ENCODE measurements at regions of chr4 and their contacts with region 1.

Region 1: GRCh38 chr4:130922955-130923354 is 1827.0 kb downstream of the C4orf33 start:
- DNase-seq: no peak
- ATAC-seq: no peak
- H3K4me3 ChIP-seq: no peak overlapping the region
- H3K27ac ChIP-seq: no peak overlapping the region
- H3K4me1 ChIP-seq: no peaks in the 10 kb centered on the region
- H3K27me3 ChIP-seq: no peaks in the 10 kb centered on the region
- CTCF ChIP-seq: no peak
- POLR2A ChIP-seq: no peak
- RAD21 ChIP-seq: no peak

Region 2: GRCh38 chr4:130349745-130350144 is 573.2 kb before region 1 on chr4:
- CTCF ChIA-PET with region 1: no interaction called
- POLR2A ChIA-PET with region 1: interaction called, 12 read pairs
- dilution Hi-C with region 1: no loop called
- in situ Hi-C with region 1: no loop called
- intact Hi-C with region 1: no loop called
- DNase-seq: no peak
- ATAC-seq: no peak
- H3K4me3 ChIP-seq: no peak overlapping the region
- H3K27ac ChIP-seq: no peak overlapping the region
- H3K4me1 ChIP-seq: no peaks in the 10 kb centered on the region
- H3K27me3 ChIP-seq: no peaks in the 10 kb centered on the region
- CTCF ChIP-seq: no peak
- POLR2A ChIP-seq: no peak
- RAD21 ChIP-seq: no peak